ENCODE measurements at regions of chr10 and their contacts with region 1.

Region 1: DNA sequence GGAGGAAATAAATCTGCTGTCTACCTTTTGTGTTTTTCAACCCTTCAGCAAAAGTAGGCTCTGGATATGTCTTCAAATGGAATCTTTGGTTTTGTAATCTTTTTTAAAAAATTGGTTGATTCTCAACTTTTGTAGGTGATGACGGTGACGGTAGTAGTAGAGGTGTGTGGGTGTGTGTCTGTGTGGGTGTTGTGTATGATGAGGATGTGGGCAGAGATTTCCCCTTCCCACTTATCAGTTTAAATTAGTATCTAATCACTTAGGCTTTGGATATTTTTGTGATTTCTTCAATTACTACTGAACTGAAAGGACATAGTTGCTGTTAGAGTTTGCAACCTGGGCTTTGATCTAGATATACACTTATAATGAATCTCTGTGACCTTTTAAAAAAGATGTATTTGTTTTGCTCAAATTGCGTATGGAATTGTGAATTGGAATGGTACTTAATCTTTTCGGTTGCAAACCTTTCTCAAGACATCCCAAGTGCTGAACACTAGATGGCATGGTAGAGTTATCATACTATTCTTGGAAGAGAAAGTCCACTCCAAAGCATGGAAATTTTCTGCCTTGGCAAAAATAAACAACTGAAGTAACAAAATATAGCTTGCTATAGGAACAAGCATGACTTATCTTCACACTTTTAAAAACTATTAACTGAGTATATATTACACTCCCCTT is 51.9 kb upstream of the A1CF start:
- DNase-seq: peak; percentile 39
- ATAC-seq: peak; percentile 75
- H3K4me3 ChIP-seq: no peak overlapping the region
- H3K27ac ChIP-seq: no peak overlapping the region
- H3K4me1 ChIP-seq: no peaks in the 10 kb centered on the region
- H3K27me3 ChIP-seq: no peaks in the 10 kb centered on the region
- CTCF ChIP-seq: peak; percentile 45 to 73 (median 60); a peak in 5 of 6 replicates
- POLR2A ChIP-seq: no peak
- RAD21 ChIP-seq: peak; percentile 55; the same call in 1 of the 2 replicates

Region 2: DNA sequence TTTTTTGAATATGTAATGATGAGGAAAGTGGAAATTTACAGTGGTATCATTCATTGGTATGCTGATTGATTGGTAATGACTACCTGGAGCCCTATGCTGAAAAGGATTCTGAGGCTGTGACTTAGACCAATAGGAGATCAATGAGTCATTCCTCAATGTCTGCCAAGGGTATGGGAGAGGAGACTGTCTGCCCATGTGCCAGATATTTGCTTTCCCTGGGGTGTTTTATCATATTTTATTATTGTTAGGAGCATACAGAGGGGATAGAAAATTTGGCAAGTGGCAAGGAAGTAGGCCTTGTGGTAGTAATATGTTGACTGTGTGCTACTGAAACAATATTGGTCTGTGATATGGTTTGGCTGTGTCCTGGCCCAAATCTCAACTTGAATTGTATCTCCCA is 142.9 kb before region 1 on chr10:
- CTCF ChIA-PET with region 1: no interaction called
- POLR2A ChIA-PET with region 1: no interaction called
- RAD21 ChIA-PET with region 1: no interaction called
- intact Hi-C with region 1: loop called (anchors 5 kb)
- DNase-seq: no peak
- ATAC-seq: no peak
- H3K4me3 ChIP-seq: no peak overlapping the region
- H3K27ac ChIP-seq: no peak overlapping the region
- H3K4me1 ChIP-seq: no peaks in the 10 kb centered on the region
- H3K27me3 ChIP-seq: no peaks in the 10 kb centered on the region
- CTCF ChIP-seq: no peak
- POLR2A ChIP-seq: no peak
- RAD21 ChIP-seq: no peak

Region 3: DNA sequence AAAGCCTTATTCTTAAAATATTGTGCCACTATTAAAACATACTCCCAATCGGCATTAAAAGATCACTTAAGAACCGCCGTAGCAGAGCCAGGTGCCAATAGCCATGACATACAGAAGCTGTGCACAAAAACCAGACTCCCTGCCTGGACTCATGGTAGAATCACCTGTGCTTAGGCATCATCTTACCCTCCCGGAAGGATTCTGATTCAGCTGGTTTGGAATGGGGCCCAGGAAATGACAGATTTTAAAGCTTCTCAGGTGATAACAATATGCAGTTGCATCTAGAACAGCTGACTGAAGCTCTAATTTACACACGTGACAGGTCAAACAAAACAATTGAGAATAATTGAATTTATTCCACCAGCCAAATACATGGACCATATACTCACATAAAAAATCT is 62.6 kb before region 1 on chr10:
- CTCF ChIA-PET with region 1: no interaction called
- POLR2A ChIA-PET with region 1: no interaction called
- RAD21 ChIA-PET with region 1: no interaction called
- intact Hi-C with region 1: no loop called
- DNase-seq: no peak
- ATAC-seq: no peak
- H3K4me3 ChIP-seq: no peak overlapping the region
- H3K27ac ChIP-seq: no peak overlapping the region
- H3K4me1 ChIP-seq: peaks cover 0 to 6% of the 10 kb centered on the region in 2 experiments; a peak in 2 of 4 replicates
- H3K27me3 ChIP-seq: no peaks in the 10 kb centered on the region
- CTCF ChIP-seq: no peak
- POLR2A ChIP-seq: no peak
- RAD21 ChIP-seq: no peak

Region 4: GRCh38 chr10:50951365-50951764 is 14.0 kb after region 1 on chr10:
- CTCF ChIA-PET with region 1: no interaction called
- POLR2A ChIA-PET with region 1: no interaction called
- RAD21 ChIA-PET with region 1: no interaction called
- intact Hi-C with region 1: no loop called
- DNase-seq: no peak
- ATAC-seq: no peak
- H3K4me3 ChIP-seq: no peak overlapping the region
- H3K27ac ChIP-seq: no peak overlapping the region
- H3K4me1 ChIP-seq: no peaks in the 10 kb centered on the region
- H3K27me3 ChIP-seq: no peaks in the 10 kb centered on the region
- CTCF ChIP-seq: no peak
- POLR2A ChIP-seq: no peak
- RAD21 ChIP-seq: no peak

Region 5: GRCh38 chr10:50968386-50969091 is 31.2 kb after region 1 on chr10:
- CTCF ChIA-PET with region 1: no interaction called
- POLR2A ChIA-PET with region 1: no interaction called
- RAD21 ChIA-PET with region 1: no interaction called
- intact Hi-C with region 1: loop called (anchors 2 kb)
- DNase-seq: no peak
- ATAC-seq: no peak
- H3K4me3 ChIP-seq: no peak overlapping the region
- H3K27ac ChIP-seq: no peak overlapping the region
- H3K4me1 ChIP-seq: no peaks in the 10 kb centered on the region
- H3K27me3 ChIP-seq: no peaks in the 10 kb centered on the region
- CTCF ChIP-seq: no peak
- POLR2A ChIP-seq: no peak
- RAD21 ChIP-seq: no peak

Region 6: GRCh38 chr10:51083356-51083853 is 146.0 kb after region 1 on chr10:
- CTCF ChIA-PET with region 1: no interaction called
- POLR2A ChIA-PET with region 1: no interaction called
- RAD21 ChIA-PET with region 1: no interaction called
- intact Hi-C with region 1: no loop called
- DNase-seq: no peak
- ATAC-seq: no peak; the same call in 1 of the 2 replicates
- H3K4me3 ChIP-seq: no peak overlapping the region
- H3K27ac ChIP-seq: no peak overlapping the region
- H3K4me1 ChIP-seq: no peaks in the 10 kb centered on the region
- H3K27me3 ChIP-seq: peaks cover 27% of the 10 kb centered on the region
- CTCF ChIP-seq: no peak
- POLR2A ChIP-seq: no peak
- RAD21 ChIP-seq: no peak